ENCODE measurements at regions of chr15 and their contacts with region 1.

Region 1: DNA sequence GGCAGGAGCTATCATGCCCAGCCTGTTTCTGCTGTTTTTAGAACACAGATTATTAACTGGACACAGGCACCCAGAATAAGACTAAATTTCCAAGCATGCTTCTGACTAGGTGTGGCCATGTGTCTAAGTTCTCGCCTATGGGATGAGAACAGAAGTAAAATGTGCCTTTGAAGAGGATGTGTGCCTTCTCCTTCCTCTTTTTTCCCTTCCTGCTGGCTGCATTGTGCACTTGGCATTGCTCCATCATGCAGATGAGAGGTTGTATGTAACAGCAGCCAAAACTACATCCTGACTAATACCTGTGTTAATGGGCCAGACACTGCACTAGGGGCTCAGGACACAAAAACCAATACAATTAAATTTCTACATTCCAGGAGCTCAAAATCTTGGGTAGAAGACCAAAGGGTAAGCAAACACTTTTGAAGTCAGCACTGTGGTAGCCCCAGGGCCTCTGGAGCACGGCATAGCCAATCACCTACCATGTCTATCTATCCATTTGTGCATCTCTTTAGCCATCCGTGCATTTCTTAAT is 40.9 kb upstream of the RNU6-1 start:
- DNase-seq: no peak
- H3K4me3 ChIP-seq: no peak overlapping the region
- H3K27ac ChIP-seq: no peak overlapping the region
- H3K4me1 ChIP-seq: peaks cover 35% of the 10 kb centered on the region
- H3K27me3 ChIP-seq: no peaks in the 10 kb centered on the region
- CTCF ChIP-seq: no peak

Region 2: GRCh38 chr15:68045289-68046265 is 164.9 kb after region 1 on chr15:
- CTCF ChIA-PET with region 1: interaction called, 11 read pairs
- POLR2A ChIA-PET with region 1: no interaction called
- intact Hi-C with region 1: no loop called
- DNase-seq: no peak
- H3K4me3 ChIP-seq: no peak overlapping the region
- H3K27ac ChIP-seq: no peak overlapping the region
- H3K4me1 ChIP-seq: no peaks in the 10 kb centered on the region
- H3K27me3 ChIP-seq: no peaks in the 10 kb centered on the region
- CTCF ChIP-seq: no peak

Measured in A673 (cell line).